Calu3 (cell line): ENCODE measurements at regions of chr3 and their contacts with region 1.

Region 1: DNA sequence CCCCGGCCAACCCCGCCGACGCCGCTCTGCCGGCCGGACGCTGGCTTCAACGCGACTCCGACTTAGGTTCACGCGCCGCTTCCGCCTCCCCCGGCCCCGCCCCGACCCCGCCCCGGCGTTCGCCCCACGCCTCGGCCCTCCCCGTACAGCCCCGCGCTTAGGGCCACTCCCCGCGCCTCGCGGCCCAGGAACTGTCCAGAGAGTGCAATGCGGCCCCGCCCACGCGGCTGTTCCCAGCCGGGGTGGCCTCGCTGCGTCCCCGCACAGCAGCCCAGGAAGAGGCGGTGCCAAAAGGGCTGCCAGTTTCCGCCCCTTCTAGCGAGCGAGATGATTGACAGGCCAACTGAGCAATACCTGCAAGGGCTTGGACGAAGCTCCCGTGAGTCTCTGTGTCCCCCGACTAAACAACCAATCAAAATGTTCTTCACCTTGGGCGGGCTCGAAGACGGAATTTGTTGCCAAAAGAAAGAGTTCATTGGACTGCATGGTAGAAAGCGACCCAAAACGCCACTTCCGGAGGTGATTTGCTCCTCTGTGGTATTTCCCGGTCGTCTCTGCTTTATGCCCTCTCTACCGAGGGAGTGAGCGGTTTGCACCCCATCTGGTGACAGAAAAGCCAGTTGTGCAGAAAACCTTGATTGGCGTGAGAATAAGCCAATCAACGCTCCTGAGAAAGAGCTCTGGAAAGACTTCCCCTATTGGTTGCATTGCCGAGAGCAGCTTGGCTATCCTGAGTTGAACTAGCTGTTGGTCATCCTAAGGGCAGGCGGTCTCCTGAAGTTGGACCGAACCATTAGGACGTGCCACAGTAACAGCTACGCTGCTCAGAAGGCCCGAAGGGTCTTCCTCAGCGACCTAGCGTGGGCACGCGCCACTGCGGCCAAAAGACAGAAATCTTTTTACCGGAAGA is at the start of gene UBP1:
- DNase-seq: peak; percentile 99
- H3K4me3 Mint-ChIP-seq: peak within 1 kb of the TSS; percentile 91
- H3K27ac Mint-ChIP-seq: peak within 1 kb of the TSS; percentile 90
- H3K4me1 Mint-ChIP-seq: peaks cover 21% of the 10 kb centered on the region
- H3K27me3 Mint-ChIP-seq: no peaks in the 10 kb centered on the region
- CTCF ChIP-seq: no peak
- total RNA-seq, gene UBP1: 68.3 and 72.4 TPM in 2 replicates

Region 2: GRCh38 chr3:33392703-33393125 is 47.9 kb before region 1 on chr3:
- CTCF ChIA-PET with region 1: no interaction called
- intact Hi-C with region 1: loop called (anchors 5 kb)
- DNase-seq: peak; percentile 5
- H3K4me3 Mint-ChIP-seq: no peak overlapping the region
- H3K27ac Mint-ChIP-seq: no peak overlapping the region
- H3K4me1 Mint-ChIP-seq: peaks cover 13% of the 10 kb centered on the region
- H3K27me3 Mint-ChIP-seq: no peaks in the 10 kb centered on the region
- CTCF ChIP-seq: no peak

Region 3: DNA sequence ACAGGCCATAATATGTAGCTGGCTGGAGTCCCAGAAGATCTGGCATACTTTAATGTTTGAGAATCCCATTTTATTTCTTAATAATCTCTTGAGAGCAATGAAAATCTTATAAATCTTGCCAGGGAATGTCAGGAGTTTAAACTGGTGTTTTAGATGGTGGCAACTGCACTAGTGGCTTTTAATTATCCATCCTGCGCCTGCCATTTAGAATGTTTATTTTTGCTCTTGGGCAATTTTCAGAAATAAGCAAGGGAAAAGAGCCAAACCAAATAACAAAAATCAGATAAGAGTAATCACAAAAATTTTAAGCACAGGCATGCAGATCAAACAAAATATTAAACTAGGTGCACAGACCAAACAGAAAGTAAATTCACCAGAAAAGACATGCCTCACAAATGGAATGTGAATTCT is 41.5 kb after region 1 on chr3:
- CTCF ChIA-PET with region 1: no interaction called
- intact Hi-C with region 1: loop called (anchors 5 kb)
- DNase-seq: no peak
- H3K4me3 Mint-ChIP-seq: no peak overlapping the region
- H3K27ac Mint-ChIP-seq: no peak overlapping the region
- H3K4me1 Mint-ChIP-seq: peaks cover 7% of the 10 kb centered on the region
- H3K27me3 Mint-ChIP-seq: no peaks in the 10 kb centered on the region
- CTCF ChIP-seq: no peak